Esophagus muscularis mucosa (tissue), 4 donors: ENCODE measurements at regions of chr11 and their contacts with region 1.

Region 1: DNA sequence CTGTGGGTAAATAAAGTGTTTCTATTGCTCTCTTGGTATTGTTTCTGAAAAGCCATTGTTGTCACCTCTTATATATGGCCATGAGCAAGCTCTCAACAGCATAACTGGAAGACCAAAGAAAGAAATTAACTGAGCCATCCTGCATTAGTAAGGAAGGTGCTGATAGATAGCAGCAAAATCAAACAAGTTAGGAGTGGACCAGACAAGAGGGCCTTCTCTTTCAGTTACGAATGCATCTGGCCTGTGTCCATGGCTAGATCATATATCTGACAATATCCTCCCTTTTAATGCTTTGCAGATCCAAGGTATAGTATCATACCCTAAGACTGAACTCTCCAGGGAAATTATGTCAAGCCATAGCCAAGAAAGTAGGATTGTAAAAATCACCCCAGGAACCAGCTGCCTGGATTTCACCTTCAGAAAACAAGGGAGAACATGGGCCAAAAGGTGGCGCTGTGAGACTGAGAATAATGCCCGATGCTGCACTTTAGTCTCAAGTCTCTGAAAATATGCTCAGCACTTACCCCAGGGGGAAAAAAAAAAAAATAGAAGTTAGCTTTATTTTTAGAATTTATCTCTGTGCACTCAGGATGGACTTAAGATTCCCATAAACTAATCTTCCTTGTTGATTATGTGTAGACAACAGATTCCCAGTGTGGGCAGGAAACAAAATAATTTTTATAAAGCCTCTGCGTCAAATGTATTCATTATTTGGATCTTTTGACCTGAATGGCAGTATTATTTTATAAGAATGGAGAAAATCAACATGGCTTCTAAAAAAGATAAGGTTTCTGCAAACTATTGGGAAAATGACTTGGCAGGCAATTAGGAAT is 415.1 kb downstream of the ETS1 start:
- DNase-seq: peak; percentile 94
- H3K4me3 ChIP-seq: no peak overlapping the region
- H3K27ac ChIP-seq: no peak overlapping the region
- H3K4me1 ChIP-seq: peaks cover 0 to 6% (median 2%) of the 10 kb centered on the region in 4 donors
- H3K27me3 ChIP-seq: no peaks in the 10 kb centered on the region
- CTCF ChIP-seq: peak; percentile 77 to 78 (median 77)
- EP300 ChIP-seq: no peak
- POLR2A ChIP-seq: no peak

Region 2: DNA sequence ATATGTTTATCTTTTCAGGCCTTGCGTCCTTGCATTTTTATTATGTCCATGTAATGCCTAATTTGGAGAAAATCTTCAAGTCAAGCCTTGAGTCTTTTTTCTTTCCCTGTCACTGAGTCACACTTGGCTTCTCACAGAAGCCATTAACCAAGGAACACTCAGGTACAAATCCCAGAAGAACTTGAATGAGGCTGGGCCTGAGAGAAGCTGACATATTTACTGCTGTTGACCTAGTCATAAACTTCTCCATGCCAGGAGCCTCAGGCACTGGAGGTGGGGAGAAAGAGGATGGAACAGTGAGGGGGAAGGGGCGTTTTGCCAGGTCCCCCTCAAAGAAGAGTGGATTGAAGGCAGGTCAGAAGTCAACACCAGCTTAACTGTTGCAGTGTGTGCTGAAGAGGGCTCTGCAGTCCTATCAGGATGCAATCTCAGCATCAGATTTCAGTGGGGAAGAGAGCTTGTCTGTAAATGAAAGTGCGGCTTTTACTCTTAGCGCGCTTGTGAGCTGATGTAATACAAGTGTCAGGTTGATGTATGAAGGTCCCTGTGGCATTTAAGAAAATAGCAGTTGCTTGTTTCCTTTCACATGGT is 110.9 kb before region 1 on chr11:
- intact Hi-C with region 1: no loop called
- DNase-seq: no peak
- H3K4me3 ChIP-seq: no peak overlapping the region
- H3K27ac ChIP-seq: no peak overlapping the region
- H3K4me1 ChIP-seq: no peaks in the 10 kb centered on the region
- H3K27me3 ChIP-seq: no peaks in the 10 kb centered on the region
- CTCF ChIP-seq: no peak
- EP300 ChIP-seq: no peak
- POLR2A ChIP-seq: no peak

Region 3: GRCh38 chr11:128630367-128631230 is 458.3 kb after region 1 on chr11:
- intact Hi-C with region 1: loop called (anchors 1 kb)
- DNase-seq: peak; percentile 96
- H3K4me3 ChIP-seq: peak overlapping the region in 1 of 4 donors; percentile 5
- H3K27ac ChIP-seq: peak overlapping the region in 1 of 4 donors; percentile 32
- H3K4me1 ChIP-seq: peaks cover 14 to 17% (median 14%) of the 10 kb centered on the region in 4 donors
- H3K27me3 ChIP-seq: no peaks in the 10 kb centered on the region
- CTCF ChIP-seq: peak; percentile 83 to 91 (median 89)
- EP300 ChIP-seq: no peak
- POLR2A ChIP-seq: no peak